ENCODE measurements at regions of chr1 and their contacts with region 1.

Region 1: DNA sequence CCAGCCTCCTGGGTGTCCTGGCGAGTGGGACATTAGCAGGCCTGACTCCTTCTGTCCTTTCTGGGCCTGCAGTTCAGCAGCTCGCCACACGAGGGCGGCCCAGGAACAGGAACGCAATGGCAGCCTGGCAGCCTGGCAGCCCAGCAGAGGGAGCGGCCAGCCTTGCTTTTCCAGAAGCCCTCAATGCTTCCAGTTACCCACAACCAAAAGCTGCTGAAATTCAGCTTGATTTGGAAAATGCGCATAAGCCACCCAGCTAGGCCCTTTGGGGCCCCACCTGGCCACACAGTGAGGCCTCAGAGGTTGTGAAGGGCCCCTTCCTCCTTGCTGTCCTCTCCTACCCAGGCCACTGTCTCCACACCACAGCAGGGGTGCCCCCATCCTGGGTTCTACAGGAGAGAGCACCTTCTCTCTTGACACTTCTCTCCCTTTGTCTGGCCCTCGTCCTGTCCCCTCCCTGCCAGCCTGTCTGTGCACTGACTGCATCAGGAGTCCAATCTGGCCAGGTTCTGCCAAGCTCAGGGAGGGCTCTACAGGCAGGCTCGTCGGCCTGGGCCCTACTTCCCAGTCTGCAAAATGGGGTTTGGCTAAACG is 103.4 kb upstream of the VAMP3 start:
- DNase-seq: peak; percentile 89 to 97 (median 96)
- ATAC-seq: peak; percentile 69 to 78
- H3K4me3 ChIP-seq: no peak overlapping the region
- H3K27ac ChIP-seq: no peak overlapping the region
- H3K4me1 ChIP-seq: peaks cover 2% of the 10 kb centered on the region
- H3K27me3 ChIP-seq: no peaks in the 10 kb centered on the region

Region 2: DNA sequence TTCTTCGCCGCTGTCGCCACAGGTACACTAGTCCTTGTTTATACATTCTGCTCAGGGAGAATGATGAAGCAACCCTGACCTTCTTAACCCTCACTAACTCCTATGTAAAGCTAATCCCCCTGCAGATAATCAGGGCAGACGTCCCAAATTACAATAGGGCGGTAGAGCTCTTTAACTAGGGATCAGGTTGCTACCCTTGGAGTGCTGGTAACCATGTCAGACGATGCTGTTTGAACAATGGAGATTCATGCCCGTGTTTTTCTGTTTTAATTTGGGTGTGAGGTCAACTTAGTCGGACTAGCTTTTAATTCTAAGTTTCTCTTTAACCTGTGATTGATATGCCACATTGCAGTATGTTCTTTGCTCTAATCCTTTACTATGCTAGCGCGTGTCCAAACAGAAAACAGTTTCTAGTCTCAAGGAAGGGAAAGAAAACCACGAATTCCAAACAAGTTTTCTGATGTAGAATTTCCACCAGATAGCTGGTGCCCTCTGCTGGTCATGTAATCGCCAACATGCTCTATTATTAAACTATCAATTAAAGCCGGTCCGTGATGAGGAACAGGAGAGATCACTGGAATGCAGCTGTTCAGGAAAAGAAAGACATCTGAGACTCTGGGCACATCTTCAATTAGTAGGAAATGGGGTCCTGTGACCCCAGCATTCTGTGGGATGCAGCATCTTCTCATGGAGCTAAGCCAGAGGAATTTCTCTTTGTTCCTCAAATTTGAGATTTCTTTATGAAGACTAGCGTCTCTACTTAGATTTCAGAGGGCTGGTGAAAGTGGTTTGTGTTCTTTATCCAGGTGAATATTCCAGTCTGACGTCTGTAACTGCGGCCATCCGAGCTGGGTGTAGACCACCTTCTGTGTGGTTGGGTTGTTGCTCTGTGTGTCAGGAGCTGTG is 85.0 kb after region 1 on chr1:
- intact Hi-C with region 1: loop called (anchors 2 kb)
- DNase-seq: peak; percentile 53 to 85 (median 69)
- ATAC-seq: peak; percentile 38 to 60
- H3K4me3 ChIP-seq: peak overlapping the region; percentile 39
- H3K27ac ChIP-seq: no peak overlapping the region
- H3K4me1 ChIP-seq: no peaks in the 10 kb centered on the region
- H3K27me3 ChIP-seq: no peaks in the 10 kb centered on the region

Region 3: GRCh38 chr1:7902478-7903085 is 234.9 kb after region 1 on chr1:
- intact Hi-C with region 1: loop called in 3 of 4 experiments (anchors 5 to 10 kb)
- DNase-seq: peak; percentile 46 to 70 (median 68)
- ATAC-seq: peak; percentile 84 to 90
- H3K4me3 ChIP-seq: no peak overlapping the region
- H3K27ac ChIP-seq: no peak overlapping the region
- H3K4me1 ChIP-seq: no peaks in the 10 kb centered on the region
- H3K27me3 ChIP-seq: no peaks in the 10 kb centered on the region

Measured in right cardiac atrium (tissue), 5 donors.